Right ventricle myocardium superior (tissue), 1 donor: ENCODE measurements at regions of chr20 and their contacts with region 1.

Region 1: GRCh38 chr20:59222253-59223181 is 58.9 kb downstream of the ZNF831 start:
- DNase-seq: peak; percentile 89
- ATAC-seq: peak; percentile 97

Region 2: GRCh38 chr20:58870239-58871014 is 352.1 kb before region 1 on chr20:
- intact Hi-C with region 1: loop called (anchors 5 kb)
- DNase-seq: peak; percentile 71
- ATAC-seq: peak; percentile 88

Region 3: DNA sequence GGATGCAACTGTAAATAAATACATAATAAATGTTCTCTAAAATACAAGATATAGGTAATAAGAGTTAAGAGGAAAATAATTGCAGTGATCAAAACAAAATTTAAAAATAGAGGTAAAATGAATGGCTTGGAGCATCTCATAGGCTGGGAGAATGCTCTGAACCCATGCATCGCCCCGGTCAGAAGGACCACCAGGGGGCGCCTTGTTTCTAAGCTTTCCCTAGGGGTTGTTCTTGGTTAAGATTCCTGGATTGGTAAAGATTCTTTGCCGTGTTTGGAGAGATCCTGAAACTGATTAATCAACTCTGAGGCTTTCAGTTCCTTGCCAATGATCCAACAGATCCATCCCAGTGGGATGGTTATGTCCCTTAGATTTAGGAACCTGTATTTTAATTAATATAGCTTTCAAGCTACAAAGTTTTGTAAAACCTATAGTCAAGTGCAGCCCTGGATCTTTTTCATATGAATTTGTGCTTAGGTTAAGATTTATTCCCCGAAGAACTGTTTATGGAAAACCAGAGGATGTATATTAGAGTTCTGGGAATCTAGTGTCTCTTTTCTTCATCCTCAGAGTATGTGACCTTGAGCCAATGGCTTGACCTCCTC is 134.6 kb before region 1 on chr20:
- intact Hi-C with region 1: loop called (anchors 2 kb)
- DNase-seq: peak; percentile 90
- ATAC-seq: peak; percentile 85

Region 4: GRCh38 chr20:59159493-59160376 is 62.8 kb before region 1 on chr20:
- intact Hi-C with region 1: loop called (anchors 10 kb)
- DNase-seq: no peak
- ATAC-seq: no peak